Naive thymus-derived CD4-positive, alpha-beta T cell (primary cell): ENCODE measurements at regions of chr12 and their contacts with region 1.

Region 1: GRCh38 chr12:68236421-68237059 is 10.9 kb upstream of the IL26 start:
- DNase-seq: peak in 7 of 9 donors; percentile 58 to 78 (median 68)
- ATAC-seq: peak; percentile 84
- H3K4me3 ChIP-seq: peak overlapping the region; percentile 64
- H3K4me3 Mint-ChIP-seq: peak overlapping the region; percentile 82 to 97 (median 94)
- H3K27ac ChIP-seq: peak overlapping the region; percentile 67
- H3K27ac Mint-ChIP-seq: peak overlapping the region; percentile 88 to 99 (median 96)
- H3K4me1 ChIP-seq: peaks cover 23 to 32% of the 10 kb centered on the region in 2 donors
- H3K4me1 Mint-ChIP-seq: peaks cover 35 to 72% (median 60%) of the 10 kb centered on the region in 7 donors
- H3K27me3 ChIP-seq: no peaks in the 10 kb centered on the region
- H3K27me3 Mint-ChIP-seq: no peaks in the 10 kb centered on the region

Region 2: GRCh38 chr12:68040450-68041075 is 196.0 kb before region 1 on chr12:
- CTCF ChIA-PET with region 1: no interaction called
- POLR2A ChIA-PET with region 1: no interaction called
- intact Hi-C with region 1: loop called in 1 of 2 experiments (anchors 5 kb)
- DNase-seq: peak; percentile 19 to 72 (median 61)
- ATAC-seq: peak; percentile 84
- H3K4me3 ChIP-seq: no peak overlapping the region
- H3K4me3 Mint-ChIP-seq: peak overlapping the region in 2 of 10 donors; percentile 13 to 33
- H3K27ac ChIP-seq: no peak overlapping the region
- H3K27ac Mint-ChIP-seq: no peak overlapping the region
- H3K4me1 ChIP-seq: peaks cover 0 to 5% of the 10 kb centered on the region in 2 donors
- H3K4me1 Mint-ChIP-seq: peaks cover 0 to 24% (median 5%) of the 10 kb centered on the region in 7 donors
- H3K27me3 ChIP-seq: no peaks in the 10 kb centered on the region
- H3K27me3 Mint-ChIP-seq: no peaks in the 10 kb centered on the region

Region 3: GRCh38 chr12:68223083-68223747 is 13.3 kb before region 1 on chr12:
- CTCF ChIA-PET with region 1: interaction called, 5 read pairs
- POLR2A ChIA-PET with region 1: interaction called, 4 read pairs
- intact Hi-C with region 1: loop called (anchors 1 kb)
- DNase-seq: peak; percentile 39 to 74 (median 64)
- ATAC-seq: peak; percentile 99
- H3K4me3 ChIP-seq: no peak overlapping the region
- H3K4me3 Mint-ChIP-seq: peak overlapping the region in 9 of 10 donors; percentile 30 to 86 (median 65)
- H3K27ac ChIP-seq: no peak overlapping the region
- H3K27ac Mint-ChIP-seq: peak overlapping the region in 6 of 9 donors; percentile 8 to 77 (median 44)
- H3K4me1 ChIP-seq: no peaks in the 10 kb centered on the region
- H3K4me1 Mint-ChIP-seq: peaks cover 6 to 35% (median 6%) of the 10 kb centered on the region in 7 donors
- H3K27me3 ChIP-seq: no peaks in the 10 kb centered on the region
- H3K27me3 Mint-ChIP-seq: peaks cover 0 to 11% (median 0%) of the 10 kb centered on the region in 5 donors

Region 4: GRCh38 chr12:68267892-68268396 is 31.4 kb after region 1 on chr12:
- CTCF ChIA-PET with region 1: no interaction called
- POLR2A ChIA-PET with region 1: no interaction called
- intact Hi-C with region 1: loop called in 1 of 2 experiments (anchors 2 kb)
- DNase-seq: peak in 1 of 9 donors; percentile 33
- ATAC-seq: no peak
- H3K4me3 ChIP-seq: no peak overlapping the region
- H3K4me3 Mint-ChIP-seq: peak overlapping the region in 1 of 10 donors; percentile 61
- H3K27ac ChIP-seq: no peak overlapping the region
- H3K27ac Mint-ChIP-seq: peak overlapping the region in 1 of 9 donors; percentile 69
- H3K4me1 ChIP-seq: no peaks in the 10 kb centered on the region
- H3K4me1 Mint-ChIP-seq: peaks cover 0 to 49% (median 0%) of the 10 kb centered on the region in 7 donors
- H3K27me3 ChIP-seq: no peaks in the 10 kb centered on the region
- H3K27me3 Mint-ChIP-seq: peaks cover 0 to 8% (median 6%) of the 10 kb centered on the region in 5 donors

Region 5: GRCh38 chr12:68290126-68290525 is 53.6 kb after region 1 on chr12:
- CTCF ChIA-PET with region 1: no interaction called
- POLR2A ChIA-PET with region 1: interaction called, 4 read pairs
- intact Hi-C with region 1: loop called (anchors 2 to 5 kb)
- DNase-seq: peak in 4 of 9 donors; percentile 2 to 16 (median 14)
- ATAC-seq: peak; percentile 62
- H3K4me3 ChIP-seq: no peak overlapping the region
- H3K4me3 Mint-ChIP-seq: peak overlapping the region in 1 of 10 donors; percentile 64
- H3K27ac ChIP-seq: no peak overlapping the region
- H3K27ac Mint-ChIP-seq: peak overlapping the region in 1 of 9 donors; percentile 82
- H3K4me1 ChIP-seq: peaks cover 0 to 14% of the 10 kb centered on the region in 2 donors
- H3K4me1 Mint-ChIP-seq: peaks cover 0 to 39% (median 10%) of the 10 kb centered on the region in 7 donors
- H3K27me3 ChIP-seq: no peaks in the 10 kb centered on the region
- H3K27me3 Mint-ChIP-seq: peaks cover 0 to 1% (median 0%) of the 10 kb centered on the region in 5 donors

Region 6: DNA sequence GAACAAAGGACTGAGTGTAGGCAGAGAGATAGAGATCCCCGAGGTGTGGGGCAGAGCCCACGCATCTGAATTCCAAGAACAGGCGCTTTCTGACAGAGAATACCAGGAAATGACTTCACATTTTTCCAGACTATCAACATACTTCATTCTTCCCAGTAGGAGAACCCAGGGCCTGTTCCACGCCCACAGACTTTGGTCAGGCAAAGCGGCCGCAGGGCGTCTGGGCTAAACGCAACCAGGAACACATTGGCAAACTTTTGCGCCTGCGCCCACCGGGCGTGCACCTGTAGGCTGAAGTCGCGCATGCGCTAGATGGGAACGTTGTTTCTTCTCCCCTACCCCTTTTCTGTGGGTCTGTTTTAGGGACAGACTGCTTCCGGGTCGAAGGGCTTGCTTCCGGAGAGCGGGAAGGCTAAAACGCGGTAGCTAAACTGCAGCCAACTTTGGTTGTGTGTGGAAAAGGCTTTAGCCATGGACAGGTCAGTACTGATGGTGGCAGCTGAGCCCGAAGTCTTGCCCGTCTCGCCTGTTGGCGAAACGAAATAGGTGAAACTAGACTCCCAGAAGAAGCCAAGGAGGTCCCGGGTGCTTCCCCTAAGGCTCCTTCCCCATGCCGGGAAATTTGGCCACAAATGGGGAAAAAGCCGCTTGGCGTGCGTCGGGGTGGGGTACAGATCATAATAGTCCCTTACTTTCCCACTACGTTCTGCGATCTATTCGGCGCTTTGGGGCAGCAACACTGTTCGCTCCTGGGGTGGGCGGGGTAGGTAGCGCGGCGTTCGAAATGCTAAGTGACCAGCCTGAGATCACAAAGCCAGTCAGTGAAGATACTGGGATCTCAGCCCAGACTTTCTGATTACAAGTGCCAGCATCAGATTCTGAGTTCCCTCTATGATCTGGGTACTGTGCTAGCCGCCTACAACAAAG is 450.3 kb after region 1 on chr12 and contains the start of gene NUP107:
- CTCF ChIA-PET with region 1: no interaction called
- POLR2A ChIA-PET with region 1: no interaction called
- intact Hi-C with region 1: loop called in 1 of 2 experiments (anchors 5 kb)
- DNase-seq: peak; percentile 92 to 97 (median 95)
- ATAC-seq: peak; percentile 99
- H3K4me3 ChIP-seq: peak within 1 kb of the TSS; percentile 90
- H3K4me3 Mint-ChIP-seq: peak within 1 kb of the TSS; percentile 94 to 100 (median 98)
- H3K27ac ChIP-seq: peak within 1 kb of the TSS; percentile 85
- H3K27ac Mint-ChIP-seq: peak within 1 kb of the TSS; percentile 96 to 100 (median 99)
- H3K4me1 ChIP-seq: peaks cover 13 to 16% of the 10 kb centered on the region in 2 donors
- H3K4me1 Mint-ChIP-seq: peaks cover 10 to 51% (median 42%) of the 10 kb centered on the region in 7 donors
- H3K27me3 ChIP-seq: no peaks in the 10 kb centered on the region
- H3K27me3 Mint-ChIP-seq: peaks cover 0 to 2% (median 0%) of the 10 kb centered on the region in 5 donors
- total RNA-seq, gene NUP107: 45.2 to 80.9 (median 69.0) TPM